ENCODE measurements at regions of chr18 and their contacts with region 1.

Region 1: DNA sequence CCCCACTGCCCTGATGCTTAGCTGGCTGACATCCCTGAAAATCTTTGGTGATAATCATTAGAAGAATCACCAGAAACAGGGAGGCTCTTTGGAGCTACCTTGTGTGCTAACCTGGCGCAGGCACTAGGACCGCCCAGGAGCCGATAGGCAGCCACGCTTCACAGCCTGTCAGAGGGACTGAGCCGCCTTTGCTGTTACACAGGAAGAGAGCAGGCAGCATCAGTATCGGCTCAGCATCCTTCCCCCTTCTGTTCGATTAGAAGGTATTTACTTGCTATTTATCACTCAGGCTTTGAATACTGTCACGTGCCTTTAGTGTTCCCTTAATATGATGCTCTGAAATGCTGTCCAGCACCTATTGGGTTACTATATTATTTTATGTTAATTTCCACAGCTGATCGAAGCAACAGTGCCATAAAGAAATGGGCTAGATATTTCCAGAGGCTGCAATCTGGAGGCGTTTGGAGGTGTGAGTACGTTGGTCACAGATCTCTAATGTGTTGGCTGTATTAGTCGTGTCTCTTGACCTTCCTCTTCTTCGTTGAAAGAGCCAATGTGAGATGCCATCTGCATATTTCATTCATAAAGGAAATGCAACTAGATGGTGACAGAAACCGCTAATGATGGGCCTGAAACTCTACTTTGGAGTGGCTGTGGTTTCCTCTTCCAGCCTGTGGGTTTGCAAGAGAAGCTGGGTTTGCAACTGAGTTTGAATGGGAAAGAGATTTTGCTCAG is 110.4 kb upstream of the RAB27B start:
- DNase-seq: peak; percentile 60
- H3K4me3 Mint-ChIP-seq: peak overlapping the region; percentile 66
- H3K27ac Mint-ChIP-seq: peak overlapping the region; percentile 4
- H3K4me1 Mint-ChIP-seq: peaks cover 49% of the 10 kb centered on the region
- H3K27me3 Mint-ChIP-seq: peaks cover 43% of the 10 kb centered on the region

Region 2: DNA sequence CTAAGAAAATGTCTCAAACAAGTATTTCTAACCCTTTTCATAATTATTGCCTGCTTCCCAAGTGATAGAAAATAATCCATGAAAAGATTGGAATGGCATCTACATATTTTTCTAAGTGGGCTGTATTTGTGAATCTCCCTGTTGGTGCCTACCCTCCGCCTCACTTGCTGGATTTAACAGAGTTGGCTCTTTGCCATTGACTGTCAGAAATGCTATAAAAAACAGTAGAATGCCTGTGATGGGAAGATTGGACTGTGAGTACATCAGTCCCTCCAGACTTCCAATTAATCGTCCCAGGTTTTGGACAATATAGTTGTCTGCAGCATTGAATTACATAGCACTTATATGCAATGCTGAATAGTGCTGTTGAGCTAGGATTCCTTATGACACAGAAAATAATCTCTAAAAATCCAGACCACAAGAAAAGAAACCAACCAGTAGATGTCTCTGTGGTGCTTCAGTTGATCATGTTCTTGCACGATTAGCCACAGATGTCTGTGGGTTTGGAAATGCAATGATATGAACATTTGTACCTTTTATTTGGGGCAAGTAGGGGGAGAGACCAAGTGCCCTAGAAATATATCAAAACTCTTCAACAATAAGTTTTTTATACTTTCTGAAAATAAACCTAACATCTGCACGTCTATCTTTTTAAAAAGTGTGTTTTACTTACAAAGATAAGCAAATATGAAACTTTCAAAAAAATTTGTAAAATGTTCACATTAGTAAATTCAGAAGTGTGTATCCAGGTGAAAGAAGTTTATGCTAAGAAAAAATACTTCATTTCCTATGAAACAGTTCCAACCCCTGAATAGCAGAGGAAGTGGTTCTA is 38.3 kb before region 1 on chr18:
- intact Hi-C with region 1: loop called (anchors 5 kb)
- DNase-seq: no peak
- H3K4me3 Mint-ChIP-seq: no peak overlapping the region
- H3K27ac Mint-ChIP-seq: no peak overlapping the region
- H3K4me1 Mint-ChIP-seq: peaks cover 4% of the 10 kb centered on the region
- H3K27me3 Mint-ChIP-seq: peaks cover 34% of the 10 kb centered on the region

Region 3: DNA sequence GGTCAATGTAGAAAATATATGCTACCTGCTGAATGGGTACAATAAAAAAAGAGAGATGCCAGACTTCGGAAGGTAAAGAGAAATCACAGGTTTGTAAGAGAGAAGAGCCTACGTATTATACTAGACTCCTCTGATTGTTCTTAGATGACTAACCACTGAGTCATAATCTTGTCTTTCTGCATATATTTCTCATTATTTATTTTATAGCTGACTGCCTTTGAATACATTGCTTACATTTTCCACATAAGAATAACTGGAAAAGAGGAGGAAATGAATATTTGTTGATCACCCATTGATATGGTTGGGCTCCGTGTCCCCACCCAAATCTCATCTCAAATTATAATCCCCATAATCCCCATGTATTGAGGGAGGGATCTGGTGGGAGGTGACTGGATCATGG is 20.1 kb after region 1 on chr18:
- intact Hi-C with region 1: loop called (anchors 1 kb)
- DNase-seq: no peak
- H3K4me3 Mint-ChIP-seq: no peak overlapping the region
- H3K27ac Mint-ChIP-seq: peak overlapping the region; percentile 63
- H3K4me1 Mint-ChIP-seq: peaks cover 5% of the 10 kb centered on the region
- H3K27me3 Mint-ChIP-seq: peaks cover 27% of the 10 kb centered on the region

Region 4: GRCh38 chr18:54776282-54776977 is 58.6 kb after region 1 on chr18:
- intact Hi-C with region 1: loop called (anchors 1 kb)
- DNase-seq: no peak
- H3K4me3 Mint-ChIP-seq: no peak overlapping the region
- H3K27ac Mint-ChIP-seq: peak overlapping the region; percentile 77
- H3K4me1 Mint-ChIP-seq: peaks cover 29% of the 10 kb centered on the region
- H3K27me3 Mint-ChIP-seq: peaks cover 10% of the 10 kb centered on the region

Region 5: GRCh38 chr18:54828281-54828881 is 110.5 kb after region 1 on chr18 and contains the start of gene RAB27B:
- intact Hi-C with region 1: loop called (anchors 2 kb)
- DNase-seq: peak; percentile 60
- H3K4me3 Mint-ChIP-seq: peak within 1 kb of the TSS; percentile 82
- H3K27ac Mint-ChIP-seq: peak within 1 kb of the TSS; percentile 3
- H3K4me1 Mint-ChIP-seq: peaks cover 19% of the 10 kb centered on the region
- H3K27me3 Mint-ChIP-seq: peaks cover 25% of the 10 kb centered on the region
- total RNA-seq, gene RAB27B: 0.75 and 0.92 TPM in 2 replicates

Region 6: DNA sequence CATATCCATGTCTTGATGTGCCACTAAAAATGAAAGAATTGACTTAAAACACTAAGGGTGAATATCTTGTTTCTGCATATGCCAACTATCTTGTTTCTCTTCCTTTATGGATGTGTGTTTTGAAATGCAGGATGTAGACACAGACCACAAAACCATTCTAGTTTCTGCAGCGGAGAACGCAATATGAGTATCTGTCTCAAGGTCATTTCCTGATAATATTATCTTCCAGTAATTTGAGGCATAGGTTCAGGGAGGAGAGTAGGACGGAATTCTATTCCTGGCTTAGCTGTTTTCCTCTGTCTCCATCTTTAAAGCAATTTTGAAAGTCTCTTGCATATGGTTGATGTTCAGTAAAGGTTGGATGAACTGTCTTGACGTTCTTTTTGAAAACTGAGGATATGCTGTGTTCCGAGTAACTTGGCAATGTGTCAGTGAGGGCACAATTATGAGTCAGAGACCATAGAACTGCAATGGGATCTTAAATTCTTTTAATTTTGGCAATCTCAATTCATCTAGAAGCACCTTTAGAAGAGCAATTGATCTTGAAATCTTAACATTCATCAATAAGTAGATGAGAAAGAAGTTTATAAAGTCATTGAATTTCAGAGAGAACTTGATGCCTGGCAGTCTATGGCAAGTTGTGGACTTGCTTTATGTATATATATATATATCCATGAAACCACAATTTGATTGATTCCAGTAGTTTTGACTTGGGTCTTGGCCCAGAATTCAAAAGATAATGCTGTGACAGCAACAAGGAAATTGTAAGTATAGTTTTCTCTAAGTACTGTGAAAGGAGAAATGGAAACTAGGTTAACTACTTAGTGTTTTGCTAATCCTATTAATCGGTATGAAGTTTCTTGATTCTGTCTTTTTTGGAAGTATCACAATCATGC is 135.2 kb after region 1 on chr18:
- intact Hi-C with region 1: loop called (anchors 2 kb)
- DNase-seq: no peak
- H3K4me3 Mint-ChIP-seq: peak overlapping the region; percentile 6
- H3K27ac Mint-ChIP-seq: no peak overlapping the region
- H3K4me1 Mint-ChIP-seq: peaks cover 22% of the 10 kb centered on the region
- H3K27me3 Mint-ChIP-seq: peaks cover 6% of the 10 kb centered on the region

Region 7: GRCh38 chr18:55038162-55038561 is 320.3 kb after region 1 on chr18:
- intact Hi-C with region 1: no loop called
- DNase-seq: no peak
- H3K4me3 Mint-ChIP-seq: no peak overlapping the region
- H3K27ac Mint-ChIP-seq: no peak overlapping the region
- H3K4me1 Mint-ChIP-seq: no peaks in the 10 kb centered on the region
- H3K27me3 Mint-ChIP-seq: no peaks in the 10 kb centered on the region

Region 8: DNA sequence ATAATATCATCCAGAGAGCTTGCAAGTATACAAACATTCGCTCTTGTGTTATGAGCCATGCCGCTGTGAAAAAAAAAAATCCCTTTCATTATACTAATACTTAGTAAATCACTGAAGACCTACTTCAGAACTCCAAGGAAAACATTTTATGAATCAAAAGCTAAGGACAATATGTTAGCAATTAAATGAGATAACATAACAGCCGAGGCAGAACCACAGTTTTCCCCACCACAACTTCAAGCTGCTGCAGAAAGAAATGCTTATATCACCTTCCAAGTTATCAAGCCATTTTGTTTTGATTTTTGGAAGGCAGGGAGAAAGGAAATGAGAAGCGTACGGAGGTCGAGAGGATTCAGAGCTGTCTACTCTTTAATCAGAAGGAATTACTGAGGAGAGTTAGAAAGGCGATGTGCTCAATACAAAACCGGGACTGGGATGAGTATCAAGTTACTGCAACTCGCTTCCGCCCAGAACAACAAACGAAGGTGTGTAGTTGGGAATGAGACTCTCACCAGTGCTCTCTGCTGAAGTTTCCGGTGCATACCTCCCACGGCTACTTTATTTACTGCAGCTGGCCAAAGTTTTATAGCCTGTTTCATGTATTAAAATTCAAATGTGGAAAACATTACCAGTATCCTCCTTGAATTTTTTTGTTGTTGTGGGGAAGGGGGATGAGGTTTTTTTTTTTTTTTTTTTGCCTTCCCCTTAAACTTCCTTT is 533.6 kb after region 1 on chr18:
- intact Hi-C with region 1: loop called (anchors 10 kb)
- DNase-seq: no peak
- H3K4me3 Mint-ChIP-seq: no peak overlapping the region
- H3K27ac Mint-ChIP-seq: no peak overlapping the region
- H3K4me1 Mint-ChIP-seq: peaks cover 45% of the 10 kb centered on the region
- H3K27me3 Mint-ChIP-seq: no peaks in the 10 kb centered on the region